ENCODE measurements at regions of chr2 and their contacts with region 1.

Region 1: DNA sequence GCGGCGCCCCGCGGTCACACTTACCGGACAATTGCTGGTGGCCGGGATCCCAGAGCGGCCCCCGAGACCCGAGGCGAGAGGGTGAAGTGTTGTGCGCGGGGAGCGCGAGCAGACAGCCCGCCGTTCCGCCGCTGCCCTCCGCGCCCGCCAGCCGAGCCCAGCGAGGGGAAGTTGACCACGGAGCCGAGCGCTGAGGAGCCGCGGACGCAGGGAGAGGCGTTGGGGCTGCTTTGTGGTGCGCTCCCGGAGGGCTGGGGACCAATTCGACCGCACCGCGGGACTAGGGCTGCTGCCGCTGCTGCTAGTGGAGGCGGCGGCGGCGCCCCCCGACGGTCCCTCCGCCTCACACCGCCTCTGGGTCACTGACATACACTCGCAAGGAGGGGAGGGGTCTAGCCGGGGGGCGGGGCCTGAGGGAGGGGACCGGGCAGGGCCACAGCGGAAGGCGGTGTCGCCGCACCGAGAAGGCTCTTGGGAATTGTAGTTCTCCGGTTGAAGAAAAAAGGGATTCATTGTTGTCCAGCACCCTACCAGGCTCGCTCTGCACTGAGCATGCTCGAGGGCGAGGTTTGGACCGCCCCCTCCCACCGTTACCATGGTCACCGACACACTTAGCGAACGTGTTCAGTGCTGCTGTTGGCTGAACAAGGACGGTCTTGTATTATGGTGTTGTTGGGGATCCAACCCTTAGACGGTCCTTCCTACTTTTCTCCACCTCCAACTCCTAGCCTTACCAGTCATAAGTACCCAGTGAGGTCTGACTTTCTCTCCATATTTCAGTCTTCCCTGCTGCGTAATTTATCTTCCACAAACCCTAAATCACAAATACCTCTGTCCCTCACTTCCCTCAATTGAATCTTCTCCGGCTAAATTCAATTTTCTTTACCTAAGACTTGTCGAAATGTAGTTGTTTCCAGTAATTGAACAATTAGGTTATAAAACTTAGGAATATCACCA is at the start of gene PELI1:
- DNase-seq: peak; percentile 79
- ATAC-seq: peak; percentile 98
- H3K4me3 ChIP-seq: peak within 1 kb of the TSS; percentile 76 to 85
- H3K27ac ChIP-seq: peak within 1 kb of the TSS; percentile 82
- H3K4me1 ChIP-seq: peaks cover 16% of the 10 kb centered on the region
- H3K27me3 ChIP-seq: no peaks in the 10 kb centered on the region; the same call in 1 of the 2 replicates
- CTCF ChIP-seq: peak; percentile 65
- total RNA-seq, gene PELI1: 6.7 TPM

Region 2: DNA sequence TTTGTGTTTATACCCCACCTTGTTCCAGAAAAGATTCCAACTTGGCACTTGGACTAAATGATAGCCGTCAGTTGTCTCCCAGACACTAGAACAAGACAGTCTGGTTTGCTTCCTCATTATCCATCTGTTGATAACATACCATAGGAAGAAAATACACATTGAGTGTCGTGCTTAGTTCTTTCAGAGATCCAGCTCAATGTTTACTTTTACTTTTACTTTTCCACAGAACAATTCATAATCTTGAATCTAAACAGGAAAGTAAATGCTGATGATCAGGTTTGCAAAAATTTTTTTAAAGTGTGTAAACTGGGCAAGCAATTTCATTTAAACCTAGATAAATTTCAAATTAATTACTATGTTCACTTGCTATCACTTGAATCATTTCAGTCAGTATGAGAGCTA is 122.7 kb before region 1 on chr2:
- CTCF ChIA-PET with region 1: no interaction called
- POLR2A ChIA-PET with region 1: interaction called, 10 read pairs
- in situ Hi-C with region 1: no loop called
- intact Hi-C with region 1: no loop called
- DNase-seq: no peak
- ATAC-seq: no peak
- H3K4me3 ChIP-seq: no peak overlapping the region
- H3K27ac ChIP-seq: peak overlapping the region; percentile 21; the same call in 1 of the 2 replicates
- H3K4me1 ChIP-seq: peaks cover 10% of the 10 kb centered on the region; the same call in 1 of the 2 replicates
- H3K27me3 ChIP-seq: no peaks in the 10 kb centered on the region
- CTCF ChIP-seq: no peak